Testis (tissue), 5 donors: ENCODE measurements at regions of chr6 and their contacts with region 1.

Region 1: GRCh38 chr6:35415065-35415991 is 36.8 kb upstream of the FANCE start:
- DNase-seq: peak; percentile 90
- H3K4me3 ChIP-seq: no peak overlapping the region
- H3K27ac ChIP-seq: no peak overlapping the region
- H3K4me1 ChIP-seq: no peaks in the 10 kb centered on the region
- H3K27me3 ChIP-seq: no peaks in the 10 kb centered on the region
- CTCF ChIP-seq: peak; percentile 55 to 72 (median 63)
- POLR2A ChIP-seq: no peak

Region 2: DNA sequence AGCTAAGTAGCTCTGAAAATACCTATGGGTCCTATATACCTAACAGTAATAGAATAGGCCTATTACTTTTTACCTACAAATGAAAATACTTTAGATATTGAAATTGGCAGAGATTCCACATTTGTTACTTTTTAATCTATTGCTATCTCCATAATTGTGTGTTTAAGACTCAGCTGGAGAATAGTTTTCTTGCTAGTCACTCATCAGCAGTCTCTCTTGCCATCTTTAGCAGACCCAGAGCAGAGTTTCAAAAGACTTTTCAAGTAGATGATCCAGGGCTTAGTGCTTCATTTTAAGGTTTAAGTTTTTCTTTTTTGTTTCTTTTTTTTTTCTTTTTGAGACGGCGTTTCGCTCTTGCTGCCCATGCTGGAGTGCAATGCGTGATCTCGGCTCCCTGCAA is 513.4 kb before region 1 on chr6:
- intact Hi-C with region 1: no loop called
- DNase-seq: no peak
- H3K4me3 ChIP-seq: no peak overlapping the region
- H3K27ac ChIP-seq: peak overlapping the region in 1 of 2 donors; percentile 38
- H3K4me1 ChIP-seq: peaks cover 50% of the 10 kb centered on the region
- H3K27me3 ChIP-seq: no peaks in the 10 kb centered on the region
- CTCF ChIP-seq: no peak
- POLR2A ChIP-seq: no peak

Region 3: DNA sequence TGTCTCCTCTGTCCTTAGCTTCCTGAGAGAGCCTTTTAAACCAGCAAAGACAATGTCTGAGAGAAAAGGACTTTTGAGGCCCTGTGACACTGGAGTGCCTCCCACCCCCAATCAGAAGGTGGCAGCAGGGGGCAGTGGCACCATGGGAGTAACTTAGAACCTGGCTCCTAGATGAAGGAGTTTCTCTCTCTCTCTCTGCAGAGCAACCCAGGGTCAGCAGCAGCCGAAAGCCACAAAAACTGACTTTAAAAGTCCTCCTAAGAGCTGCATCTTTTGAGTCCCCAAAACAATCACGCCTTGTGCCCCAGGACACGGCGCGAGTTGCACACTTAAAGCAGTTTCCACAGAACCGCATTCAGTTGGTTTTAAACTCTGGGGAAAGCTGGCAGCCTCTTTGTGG is 268.9 kb before region 1 on chr6:
- intact Hi-C with region 1: no loop called
- DNase-seq: peak; percentile 64
- H3K4me3 ChIP-seq: no peak overlapping the region
- H3K27ac ChIP-seq: no peak overlapping the region
- H3K4me1 ChIP-seq: no peaks in the 10 kb centered on the region
- H3K27me3 ChIP-seq: no peaks in the 10 kb centered on the region
- CTCF ChIP-seq: peak in 1 of 3 experiments; percentile 33
- POLR2A ChIP-seq: no peak

Region 4: GRCh38 chr6:35342258-35343091 is 72.9 kb before region 1 on chr6 and contains the start of gene PPARD:
- intact Hi-C with region 1: loop called (anchors 10 kb)
- DNase-seq: peak; percentile 99
- H3K4me3 ChIP-seq: peak within 1 kb of the TSS; percentile 75 to 80
- H3K27ac ChIP-seq: peak within 1 kb of the TSS; percentile 81 to 89
- H3K4me1 ChIP-seq: peaks cover 14% of the 10 kb centered on the region
- H3K27me3 ChIP-seq: no peaks in the 10 kb centered on the region
- CTCF ChIP-seq: peak; percentile 95 to 100 (median 99)
- POLR2A ChIP-seq: peak; percentile 56
- total RNA-seq, gene PPARD: 21.0 to 23.0 TPM